Activated CD8-positive, alpha-beta memory T cell treated with anti-CD3 and anti-CD28 coated beads, Interleukin-2, amount 10 ng/mL, durations not matched to agents 7 days and 5 days (primary cell): ENCODE measurements at regions of chr17 and their contacts with region 1.

Region 1: GRCh38 chr17:63425482-63425881 is 20.6 kb downstream of the CYB561 start:
- DNase-seq: peak; percentile 83
- ATAC-seq: peak; percentile 75
- H3K4me3 Mint-ChIP-seq: no peak overlapping the region
- H3K27ac Mint-ChIP-seq: no peak overlapping the region
- H3K4me1 Mint-ChIP-seq: peaks cover 52% of the 10 kb centered on the region
- H3K27me3 Mint-ChIP-seq: no peaks in the 10 kb centered on the region

Region 2: DNA sequence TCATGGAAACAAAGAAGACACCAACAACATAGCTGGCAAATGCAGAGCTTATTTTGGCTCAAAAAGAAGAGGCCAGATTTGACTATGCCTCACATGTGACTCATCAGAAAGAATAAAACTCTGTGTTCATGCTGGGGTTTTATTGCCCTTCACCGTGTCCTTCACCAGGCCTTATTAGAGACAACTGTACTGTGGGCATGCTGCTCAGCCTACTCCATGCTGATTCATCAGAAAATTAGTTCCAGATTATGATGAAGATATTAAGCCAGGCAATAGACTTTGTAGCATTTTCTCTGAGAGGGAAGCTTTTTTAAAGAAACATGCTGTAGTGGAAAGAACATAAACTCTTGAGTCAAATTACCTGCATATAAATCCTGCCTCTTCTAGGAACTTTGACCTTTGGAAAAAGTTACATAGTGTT is 69.1 kb before region 1 on chr17:
- CTCF ChIA-PET with region 1: no interaction called
- DNase-seq: no peak
- ATAC-seq: no peak
- H3K4me3 Mint-ChIP-seq: no peak overlapping the region
- H3K27ac Mint-ChIP-seq: no peak overlapping the region
- H3K4me1 Mint-ChIP-seq: no peaks in the 10 kb centered on the region
- H3K27me3 Mint-ChIP-seq: no peaks in the 10 kb centered on the region

Region 3: DNA sequence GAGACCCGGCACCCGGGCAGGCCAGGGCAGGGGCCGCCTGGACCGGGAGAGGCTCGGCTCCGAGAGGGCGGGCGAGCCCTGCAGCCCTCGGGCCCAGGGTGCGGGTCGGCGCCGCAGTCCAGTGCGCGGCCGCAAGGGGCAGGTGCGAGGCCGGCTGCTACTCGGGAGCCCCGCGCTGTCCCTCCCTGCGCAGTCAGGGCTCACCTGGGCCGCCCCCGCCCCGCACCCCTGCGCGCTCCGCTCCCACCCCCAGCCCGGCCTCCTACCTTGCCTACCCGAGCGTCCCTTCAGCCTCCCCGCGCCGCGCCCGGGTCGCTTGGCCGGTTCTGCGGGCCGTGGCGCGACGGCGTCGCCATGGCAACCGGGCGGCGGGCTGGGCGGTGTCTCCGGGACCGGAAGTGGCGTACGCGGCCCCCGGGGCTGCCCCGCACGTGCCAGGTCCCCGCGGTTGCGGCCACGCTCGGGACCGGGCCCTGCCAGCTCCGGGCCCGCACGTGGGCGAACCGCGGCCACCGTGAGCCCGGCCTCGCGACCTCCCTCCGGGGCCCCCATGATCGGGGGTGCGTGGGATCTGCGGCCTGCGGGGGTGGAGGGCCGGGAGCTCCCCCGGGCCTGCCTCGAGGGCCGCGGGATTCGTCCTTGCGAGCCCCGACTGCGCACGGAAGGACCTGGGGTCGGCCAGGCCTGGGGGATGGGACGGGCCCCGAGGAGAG is 20.7 kb after region 1 on chr17 and contains the start of gene CYB561:
- CTCF ChIA-PET with region 1: interaction called, 185 read pairs
- DNase-seq: peak; percentile 70
- ATAC-seq: peak; percentile 76
- H3K4me3 Mint-ChIP-seq: peak within 1 kb of the TSS; percentile 47
- H3K27ac Mint-ChIP-seq: peak within 1 kb of the TSS; percentile 75
- H3K4me1 Mint-ChIP-seq: peaks cover 18% of the 10 kb centered on the region
- H3K27me3 Mint-ChIP-seq: peaks cover 3% of the 10 kb centered on the region
- total RNA-seq, gene CYB561: 2.2 to 13.6 TPM

Region 4: GRCh38 chr17:63549946-63550807 is 124.7 kb after region 1 on chr17 and contains the start of gene DCAF7:
- CTCF ChIA-PET with region 1: interaction called, 38 read pairs
- DNase-seq: peak; percentile 100
- ATAC-seq: peak; percentile 95
- H3K4me3 Mint-ChIP-seq: peak within 1 kb of the TSS; percentile 88
- H3K27ac Mint-ChIP-seq: peak within 1 kb of the TSS; percentile 98
- H3K4me1 Mint-ChIP-seq: peaks cover 33% of the 10 kb centered on the region
- H3K27me3 Mint-ChIP-seq: no peaks in the 10 kb centered on the region
- total RNA-seq, gene DCAF7: 129 to 139 TPM

Region 5: DNA sequence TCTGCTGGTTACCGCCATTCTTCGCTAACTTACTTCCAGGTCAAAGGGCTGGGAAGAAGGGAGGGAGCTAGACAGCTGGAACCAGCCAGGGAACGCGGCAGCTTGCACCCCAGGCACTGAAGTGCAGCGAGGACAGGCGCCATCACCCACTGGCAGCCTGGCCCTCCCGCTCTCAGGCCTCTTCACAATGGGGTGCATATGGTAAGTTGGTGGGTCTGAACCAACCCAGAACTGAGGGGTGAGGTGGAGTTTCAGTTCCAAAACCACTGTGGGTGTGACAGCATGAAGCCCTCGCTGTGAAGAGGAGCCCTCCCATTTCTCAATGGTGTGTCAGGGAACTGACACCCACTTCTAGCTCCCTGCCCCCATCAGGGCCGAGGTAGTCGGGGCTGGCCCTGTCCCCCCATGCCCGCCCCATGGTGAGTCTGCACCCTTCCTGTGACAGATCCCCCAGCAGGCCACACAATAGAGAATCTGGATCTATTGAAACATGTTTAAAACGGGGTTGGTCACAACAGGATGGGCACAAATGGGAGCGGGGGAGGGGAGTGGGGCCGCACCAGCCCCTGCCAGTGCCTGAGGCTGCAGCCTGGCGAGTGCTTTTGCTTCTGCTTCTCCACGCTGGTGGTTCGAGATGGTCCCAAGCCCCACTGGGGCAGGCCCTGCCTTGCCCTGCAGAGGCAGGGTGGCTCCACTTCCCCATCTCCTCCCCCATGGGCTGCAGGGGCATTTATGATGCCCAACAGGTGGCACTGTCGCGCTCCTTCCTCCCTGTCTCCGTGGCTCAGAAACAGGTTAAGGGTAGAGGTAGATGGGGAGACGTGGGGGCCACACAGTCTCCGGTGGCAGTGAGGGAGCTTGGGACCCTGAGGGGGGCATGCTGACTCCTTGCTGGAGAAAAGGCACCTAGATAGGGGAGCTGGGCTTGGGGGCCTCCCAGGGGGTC is 272.1 kb after region 1 on chr17:
- CTCF ChIA-PET with region 1: interaction called, 11 read pairs
- DNase-seq: peak; percentile 92
- ATAC-seq: peak; percentile 35
- H3K4me3 Mint-ChIP-seq: peak overlapping the region; percentile 84
- H3K27ac Mint-ChIP-seq: peak overlapping the region; percentile 94
- H3K4me1 Mint-ChIP-seq: peaks cover 48% of the 10 kb centered on the region
- H3K27me3 Mint-ChIP-seq: no peaks in the 10 kb centered on the region